ENCODE measurements at regions of chr11 and their contacts with region 1.

Region 1: GRCh38 chr11:59040607-59041006 is 45.5 kb upstream of the GLYATL1B start:
- DNase-seq: no peak

Region 2: DNA sequence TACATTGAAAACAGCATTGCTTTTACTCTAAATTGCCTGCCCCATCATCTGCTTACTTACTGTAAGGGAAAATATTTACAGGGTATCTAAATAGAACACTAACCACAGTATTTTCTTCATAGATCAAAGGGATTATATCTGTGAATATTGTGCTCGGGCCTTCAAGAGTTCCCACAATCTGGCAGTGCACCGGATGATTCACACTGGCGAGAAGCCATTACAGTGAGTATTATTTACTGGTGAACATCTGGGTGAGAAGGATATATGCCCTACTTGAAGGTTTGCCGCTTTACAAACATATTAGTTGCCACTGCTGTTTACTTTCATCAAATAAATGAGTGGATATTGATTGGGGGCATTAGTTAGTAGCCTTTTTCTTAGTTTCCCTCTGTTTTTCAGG is 424.0 kb before region 1 on chr11:
- intact Hi-C with region 1: no loop called
- DNase-seq: no peak

Region 3: GRCh38 chr11:59076876-59077571 is 36.4 kb after region 1 on chr11:
- intact Hi-C with region 1: loop called (anchors 2 kb)
- DNase-seq: no peak